IMR-90 (cell line): ENCODE measurements at regions of chr20 and their contacts with region 1.

Region 1: DNA sequence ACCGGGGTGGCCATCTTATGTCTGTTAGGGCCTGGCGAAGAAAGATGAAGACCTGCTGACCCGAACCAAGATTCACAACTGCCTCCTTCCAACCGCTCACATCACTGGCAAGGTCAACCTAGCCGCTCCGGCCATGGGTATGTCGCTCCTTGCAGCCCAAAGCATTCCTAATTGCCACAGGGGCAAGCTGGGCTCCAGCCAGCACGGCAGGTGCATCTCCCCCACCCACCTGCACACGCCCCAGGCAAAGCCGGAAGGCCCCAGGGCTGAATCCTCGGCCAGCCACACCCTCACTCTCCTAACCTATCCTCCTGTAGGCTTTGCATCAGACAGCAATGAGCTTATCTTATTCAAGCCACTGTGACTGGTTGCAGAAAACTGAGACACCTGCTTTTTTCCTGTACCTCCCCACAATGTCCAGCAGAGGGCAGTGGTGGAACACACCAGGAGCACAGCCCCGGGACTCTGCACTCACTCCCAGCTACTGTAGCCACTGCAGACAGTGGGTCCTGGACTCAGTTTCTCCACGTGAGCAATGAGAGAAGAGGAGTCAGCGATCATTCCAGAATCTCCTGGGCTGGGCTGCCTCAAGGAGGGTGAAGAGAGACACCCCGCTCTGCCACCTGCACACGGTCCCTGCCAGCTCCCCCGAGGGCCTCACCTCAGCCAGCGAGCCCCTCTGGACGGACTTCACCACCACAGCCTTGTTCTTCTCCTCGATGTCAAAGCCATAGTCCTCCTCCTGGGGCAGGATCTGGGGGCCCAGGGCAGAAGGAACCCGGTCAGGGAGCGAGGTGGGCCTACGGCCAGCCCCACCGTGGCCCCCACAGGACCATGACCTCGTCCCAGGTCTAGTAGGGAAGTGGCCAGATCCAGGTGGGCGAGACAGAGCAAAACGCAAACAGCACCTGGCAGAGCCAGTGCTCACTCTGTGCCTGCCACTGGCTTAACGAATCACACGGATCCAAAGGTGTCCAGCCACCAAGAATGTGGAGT is 170.0 kb downstream of the PREX1 start:
- DNase-seq: peak; percentile 69
- ATAC-seq: peak; percentile 91
- H3K4me3 ChIP-seq: no peak overlapping the region
- H3K27ac ChIP-seq: no peak overlapping the region
- H3K4me1 ChIP-seq: peaks cover 2% of the 10 kb centered on the region; the same call in 1 of the 2 replicates
- H3K27me3 ChIP-seq: 0 out of 2 replicates have a peak, but pooled peaks cover 2% of the 10 kb centered on the region
- CTCF ChIP-seq: peak; percentile 97
- POLR2A ChIP-seq: peak; percentile 51; the same call in 1 of the 2 replicates
- RAD21 ChIP-seq: peak; percentile 99

Region 2: DNA sequence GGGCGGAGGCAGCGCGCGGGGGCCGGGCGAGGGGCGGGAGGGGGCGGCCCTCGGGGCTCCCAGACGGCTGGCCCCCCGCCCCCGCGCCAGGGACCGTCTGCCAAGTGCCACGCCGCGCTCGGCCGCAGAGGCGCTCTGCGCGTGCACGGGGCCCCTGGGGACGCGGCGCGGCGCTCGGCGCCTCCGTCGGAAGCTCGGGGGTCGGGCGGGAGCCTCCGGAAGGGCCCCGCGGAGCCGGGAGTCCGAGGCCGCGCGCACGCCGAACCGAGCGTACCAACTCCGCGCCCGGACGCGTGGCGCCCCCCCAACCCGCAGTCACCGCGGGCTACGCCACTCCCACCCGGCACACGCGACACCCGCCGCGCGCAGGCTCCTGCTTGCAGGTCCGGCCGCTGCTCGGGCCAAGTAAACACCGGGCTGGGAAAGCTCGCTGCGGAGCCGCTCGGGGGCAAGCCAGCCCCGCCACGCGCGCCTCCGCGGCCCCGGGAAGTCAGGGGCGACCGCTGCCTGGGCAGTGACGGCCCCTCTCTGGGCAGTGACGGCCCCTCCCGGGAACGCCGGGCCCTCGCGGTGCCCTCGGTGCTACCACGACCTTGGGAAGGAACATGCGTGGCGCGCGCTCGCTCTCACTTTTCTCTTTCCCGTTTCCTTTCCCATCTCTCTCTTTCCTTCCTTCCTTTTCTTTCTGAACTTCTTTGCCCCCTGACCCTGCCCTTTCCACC is 170.4 kb after region 1 on chr20:
- CTCF ChIA-PET with region 1: interaction called, 6 read pairs
- POLR2A ChIA-PET with region 1: no interaction called
- dilution Hi-C with region 1: no loop called
- in situ Hi-C with region 1: no loop called
- intact Hi-C with region 1: loop called (anchors 10 kb)
- DNase-seq: peak; percentile 61
- ATAC-seq: peak; percentile 84
- H3K4me3 ChIP-seq: peak overlapping the region; percentile 58
- H3K27ac ChIP-seq: no peak overlapping the region
- H3K4me1 ChIP-seq: peaks cover 13% of the 10 kb centered on the region; the same call in 1 of the 2 replicates
- H3K27me3 ChIP-seq: peaks cover 18% of the 10 kb centered on the region
- CTCF ChIP-seq: no peak
- POLR2A ChIP-seq: no peak
- RAD21 ChIP-seq: no peak

Region 3: GRCh38 chr20:48923149-48923718 is 265.5 kb after region 1 on chr20:
- CTCF ChIA-PET with region 1: no interaction called
- POLR2A ChIA-PET with region 1: no interaction called
- dilution Hi-C with region 1: no loop called
- in situ Hi-C with region 1: no loop called
- intact Hi-C with region 1: no loop called
- DNase-seq: no peak
- ATAC-seq: no peak
- H3K4me3 ChIP-seq: no peak overlapping the region
- H3K27ac ChIP-seq: no peak overlapping the region
- H3K4me1 ChIP-seq: peaks cover 5% of the 10 kb centered on the region
- H3K27me3 ChIP-seq: no peaks in the 10 kb centered on the region; the same call in 1 of the 2 replicates
- CTCF ChIP-seq: no peak
- POLR2A ChIP-seq: no peak
- RAD21 ChIP-seq: no peak

Region 4: DNA sequence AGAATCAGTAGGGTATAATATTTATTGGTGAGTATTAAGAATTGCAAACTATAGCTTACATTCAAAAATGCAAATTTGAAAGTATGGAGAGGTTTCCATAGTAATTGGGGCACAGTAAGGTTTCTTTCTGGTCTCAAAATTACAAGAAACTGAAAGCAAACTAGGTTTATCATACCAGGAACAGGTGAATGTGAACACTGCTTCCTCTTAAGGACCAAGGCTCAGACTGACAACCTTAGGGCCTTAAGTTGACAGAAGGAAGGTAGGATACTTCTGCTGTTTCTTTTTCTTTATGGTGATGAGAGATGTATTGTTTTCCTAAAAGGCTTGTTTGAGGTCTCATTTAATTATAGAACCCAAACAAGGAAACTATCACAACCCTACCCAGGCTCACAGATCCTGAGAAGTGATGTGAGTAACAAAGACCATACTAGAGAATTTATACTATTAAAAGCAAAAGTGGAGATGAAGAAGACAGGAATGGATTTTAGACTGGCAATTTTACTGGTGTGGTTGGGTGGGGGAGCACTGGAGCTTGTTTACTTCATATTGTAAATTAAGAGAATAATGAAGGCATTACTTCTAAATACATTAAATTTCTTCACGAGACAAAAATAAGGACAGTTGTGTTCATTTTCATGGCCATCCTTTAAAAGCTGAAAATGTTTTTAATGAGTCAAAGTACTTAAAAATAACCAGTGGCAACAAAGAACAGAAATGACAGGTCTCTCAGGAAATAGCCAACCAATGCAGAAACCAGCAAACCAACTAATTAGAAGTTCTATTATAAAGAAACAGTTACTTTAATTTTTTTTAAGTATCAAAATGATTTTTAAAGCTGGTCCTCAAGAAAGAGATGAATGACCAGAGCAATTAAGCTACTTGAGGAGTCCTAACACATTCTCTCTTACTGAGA is 509.0 kb after region 1 on chr20:
- CTCF ChIA-PET with region 1: no interaction called
- POLR2A ChIA-PET with region 1: no interaction called
- dilution Hi-C with region 1: no loop called
- in situ Hi-C with region 1: no loop called
- intact Hi-C with region 1: no loop called
- DNase-seq: no peak
- ATAC-seq: no peak
- H3K4me3 ChIP-seq: no peak overlapping the region
- H3K27ac ChIP-seq: no peak overlapping the region
- H3K4me1 ChIP-seq: peaks cover 4% of the 10 kb centered on the region
- H3K27me3 ChIP-seq: no peaks in the 10 kb centered on the region
- CTCF ChIP-seq: no peak
- POLR2A ChIP-seq: no peak
- RAD21 ChIP-seq: no peak